ENCODE measurements at regions of chr16 and their contacts with region 1.

Region 1: DNA sequence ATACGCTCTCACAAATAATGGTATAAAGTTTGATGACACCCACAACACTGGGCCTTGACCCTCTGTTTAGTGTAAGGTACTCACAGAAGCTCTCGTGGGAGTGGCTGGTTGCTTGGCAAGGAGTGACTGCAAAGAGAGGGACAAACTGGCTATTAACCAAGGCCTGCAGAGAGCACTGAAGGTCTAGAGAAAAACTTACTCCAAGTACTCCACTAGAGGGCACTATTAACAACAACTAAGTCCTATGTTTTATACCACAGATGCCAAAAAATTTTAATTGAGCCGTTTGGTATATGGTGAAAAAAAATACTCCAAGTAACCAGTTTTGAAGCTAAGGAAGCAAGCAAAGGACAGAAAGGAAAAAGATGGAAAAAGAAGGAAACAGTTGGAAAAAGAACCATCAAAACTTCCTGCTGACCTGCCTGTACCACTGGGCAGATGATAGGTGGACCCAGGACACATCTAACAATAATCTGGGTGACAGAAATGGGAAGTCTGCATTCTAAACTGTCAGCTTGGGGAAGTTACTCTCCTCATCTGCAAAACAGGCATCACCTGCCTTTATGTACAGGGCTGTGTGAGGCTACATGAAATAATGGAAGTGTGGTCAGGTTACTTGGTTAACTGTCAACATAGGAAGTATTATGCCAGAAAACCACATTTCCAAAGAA is 23.2 kb downstream of the DYNC1LI2 start:
- DNase-seq: no peak
- ATAC-seq: peak; percentile 77 to 94 (median 82)
- H3K4me3 ChIP-seq: no peak overlapping the region
- H3K27ac ChIP-seq: no peak overlapping the region
- H3K4me1 ChIP-seq: no peaks in the 10 kb centered on the region
- H3K27me3 ChIP-seq: no peaks in the 10 kb centered on the region
- CTCF ChIP-seq: peak; percentile 63

Region 2: DNA sequence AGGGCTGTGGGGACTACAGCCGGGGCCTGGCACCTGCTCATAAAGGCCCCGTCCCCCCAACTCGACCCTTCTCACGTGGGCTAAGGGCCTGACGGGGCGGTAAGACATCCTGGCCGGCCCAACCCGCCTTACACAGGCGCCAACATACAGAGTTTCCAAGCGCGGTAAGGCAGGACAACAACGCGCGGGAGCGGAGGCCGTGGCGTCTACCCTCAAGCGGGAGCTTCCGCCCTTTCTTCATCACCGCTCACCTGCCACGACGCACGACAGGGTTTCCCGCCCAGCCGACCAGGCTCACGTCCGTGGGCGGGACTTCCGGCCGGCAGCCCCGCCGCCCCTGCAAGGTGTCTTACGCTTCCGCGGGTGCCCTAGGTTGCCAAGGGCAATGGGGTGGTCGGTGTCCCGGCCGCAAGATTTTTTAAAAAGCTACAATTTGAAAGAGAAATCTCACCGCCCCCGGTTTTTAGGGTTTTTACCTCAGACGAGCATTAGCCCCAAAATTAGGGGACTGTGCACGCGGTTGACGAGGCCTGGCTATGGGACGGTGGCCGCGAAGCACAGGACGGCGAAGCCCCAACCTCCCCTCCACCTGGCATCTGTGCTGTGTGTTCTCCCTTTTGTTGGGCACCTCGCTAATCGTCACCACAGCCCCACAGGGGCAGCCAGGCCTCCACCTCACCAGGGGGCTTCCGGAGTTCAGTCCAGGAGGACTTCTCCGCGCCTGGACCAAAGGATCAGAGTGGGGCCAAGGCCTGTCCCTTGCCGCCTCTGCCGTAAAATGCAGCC is 73.3 kb after region 1 on chr16 and contains the start of gene TERB1:
- intact Hi-C with region 1: loop called in 1 of 2 experiments (anchors 5 kb)
- DNase-seq: no peak
- ATAC-seq: peak in 1 of 4 donors; percentile 22
- H3K4me3 ChIP-seq: no peak within 1 kb of the TSS
- H3K27ac ChIP-seq: no peak within 1 kb of the TSS
- H3K4me1 ChIP-seq: no peaks in the 10 kb centered on the region
- H3K27me3 ChIP-seq: no peaks in the 10 kb centered on the region
- CTCF ChIP-seq: no peak
- total RNA-seq, gene TERB1: 0.26 TPM in 1 of 4 donors, not detected in the others

Measured in psoas muscle (tissue), 8 donors.